OCI-LY7 (cell line): ENCODE measurements at regions of chr2 and their contacts with region 1.

Region 1: DNA sequence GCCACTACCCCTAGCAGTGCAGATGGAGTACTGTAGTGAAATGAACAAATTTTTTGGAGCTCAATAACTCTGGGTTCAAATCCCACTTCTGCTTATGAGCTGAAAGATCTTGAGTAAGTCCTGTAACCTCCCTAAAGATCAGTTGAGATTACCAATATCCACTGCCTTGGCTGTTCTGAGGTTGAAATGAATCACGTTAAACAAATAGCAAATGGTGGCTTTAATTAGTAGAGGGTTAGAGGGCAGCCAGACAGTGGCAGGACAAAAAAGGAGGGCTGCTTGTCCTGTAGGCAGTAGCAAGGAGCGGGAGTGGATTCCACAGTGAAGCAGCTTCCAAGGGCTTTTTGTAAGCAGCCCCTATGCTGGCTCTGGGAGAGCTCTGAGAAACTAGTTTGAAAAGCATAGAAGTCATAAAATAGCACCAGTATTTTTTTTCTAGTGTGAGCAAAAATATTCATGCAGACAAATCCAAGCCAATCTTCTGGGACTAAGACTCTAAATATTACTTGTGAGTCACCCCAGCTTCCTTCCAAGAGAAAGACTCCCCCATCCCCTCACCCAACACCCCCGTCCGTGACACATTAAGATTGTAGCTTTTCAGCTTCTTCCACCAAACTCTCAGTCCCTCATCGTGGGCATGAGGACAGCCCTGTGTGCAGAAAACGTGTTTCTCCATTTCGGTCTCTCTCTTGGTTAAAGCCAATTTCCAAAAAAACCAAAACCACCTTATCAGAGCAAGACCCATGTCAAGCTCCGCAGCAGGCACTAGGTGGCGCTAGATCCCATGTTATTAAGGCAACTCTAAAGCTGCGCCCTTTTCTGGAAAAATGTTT is 123.5 kb upstream of the LGALSL start:
- DNase-seq: peak; percentile 92
- H3K4me3 ChIP-seq: peak overlapping the region; percentile 29
- H3K27ac ChIP-seq: no peak overlapping the region
- H3K4me1 ChIP-seq: peaks cover 58% of the 10 kb centered on the region
- CTCF ChIP-seq: peak; percentile 99

Region 2: DNA sequence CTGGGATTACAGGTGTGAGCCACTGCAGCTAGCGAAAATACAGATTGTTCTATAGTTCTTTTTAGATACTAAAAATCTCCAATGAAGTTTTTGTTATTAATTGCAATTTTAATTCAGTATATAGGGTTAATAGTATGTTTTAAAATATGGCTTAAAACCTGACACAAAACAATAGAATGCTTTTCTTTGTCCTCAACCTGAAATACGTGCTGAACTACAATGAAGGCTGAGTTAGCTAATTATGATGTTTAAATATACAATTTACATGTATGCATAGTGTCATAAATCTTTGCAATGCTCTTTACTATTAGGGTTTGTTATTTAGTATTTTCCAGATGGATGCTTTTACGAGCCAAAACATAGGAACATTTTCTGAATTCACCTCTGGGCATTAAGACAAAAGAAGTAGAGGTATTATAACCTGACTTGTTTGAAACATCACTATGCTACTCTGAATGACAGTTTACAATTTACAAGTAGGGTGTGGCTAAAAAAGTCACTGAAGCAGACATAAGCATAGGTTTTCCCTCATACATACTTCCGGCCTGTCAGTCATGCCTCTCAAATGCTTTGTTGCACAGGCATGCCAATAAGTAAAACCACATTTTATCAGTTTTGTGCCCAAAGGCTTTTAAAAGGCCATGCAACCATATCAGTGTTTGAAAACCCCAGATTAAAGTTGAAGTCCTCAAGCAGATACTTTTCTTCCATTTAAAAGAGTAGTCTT is 1111.5 kb before region 1 on chr2:
- CTCF ChIA-PET with region 1: no interaction called
- POLR2A ChIA-PET with region 1: no interaction called
- intact Hi-C with region 1: no loop called
- DNase-seq: peak; percentile 30
- H3K4me3 ChIP-seq: no peak overlapping the region
- H3K27ac ChIP-seq: no peak overlapping the region
- H3K4me1 ChIP-seq: no peaks in the 10 kb centered on the region
- CTCF ChIP-seq: no peak

Region 3: GRCh38 chr2:64092502-64092901 is 238.0 kb before region 1 on chr2:
- CTCF ChIA-PET with region 1: no interaction called
- POLR2A ChIA-PET with region 1: no interaction called
- intact Hi-C with region 1: loop called (anchors 5 kb)
- DNase-seq: peak; percentile 83
- H3K4me3 ChIP-seq: peak overlapping the region; percentile 54
- H3K27ac ChIP-seq: peak overlapping the region; percentile 99
- H3K4me1 ChIP-seq: peaks cover 87% of the 10 kb centered on the region
- CTCF ChIP-seq: no peak

Region 4: GRCh38 chr2:64214281-64215115 is 116.0 kb before region 1 on chr2:
- CTCF ChIA-PET with region 1: interaction called, 4 read pairs
- POLR2A ChIA-PET with region 1: interaction called, 4 read pairs
- intact Hi-C with region 1: loop called (anchors 5 kb)
- DNase-seq: peak; percentile 94
- H3K4me3 ChIP-seq: peak overlapping the region; percentile 59
- H3K27ac ChIP-seq: peak overlapping the region; percentile 96
- H3K4me1 ChIP-seq: peaks cover 64% of the 10 kb centered on the region
- CTCF ChIP-seq: no peak

Region 5: GRCh38 chr2:64426183-64426952 is 95.9 kb after region 1 on chr2:
- CTCF ChIA-PET with region 1: no interaction called
- POLR2A ChIA-PET with region 1: no interaction called
- intact Hi-C with region 1: no loop called
- DNase-seq: no peak
- H3K4me3 ChIP-seq: no peak overlapping the region
- H3K27ac ChIP-seq: no peak overlapping the region
- H3K4me1 ChIP-seq: no peaks in the 10 kb centered on the region
- CTCF ChIP-seq: no peak

Region 6: DNA sequence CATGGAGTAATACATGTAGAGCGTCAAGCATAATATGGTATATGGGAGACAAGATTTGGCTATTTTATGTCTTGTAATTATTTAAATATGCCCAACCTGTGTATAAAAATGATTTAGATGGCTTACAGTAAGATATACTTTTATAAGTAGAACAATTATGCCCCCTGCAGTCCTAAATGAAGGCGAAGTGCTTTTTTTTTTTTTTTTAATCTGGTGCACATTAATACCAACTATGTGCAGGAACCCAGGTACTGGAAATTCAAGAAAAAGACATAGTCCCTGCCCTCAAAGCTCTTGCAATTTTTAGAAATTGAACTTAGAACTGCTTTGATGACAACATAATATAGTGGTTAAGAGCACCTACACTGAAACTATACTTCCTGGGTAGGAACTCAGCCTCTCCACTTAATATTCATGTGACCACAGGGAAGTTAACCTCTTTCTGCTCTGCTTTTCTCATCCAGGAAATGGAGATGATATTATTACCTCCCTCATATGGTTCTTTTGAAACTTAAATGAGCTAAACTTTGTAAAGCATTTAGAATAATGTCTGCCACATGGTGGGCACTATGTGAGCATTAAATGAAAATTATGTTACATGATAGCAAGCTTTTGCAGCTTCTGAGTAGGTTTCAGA is 231.8 kb after region 1 on chr2:
- CTCF ChIA-PET with region 1: no interaction called
- POLR2A ChIA-PET with region 1: interaction called, 3 read pairs
- intact Hi-C with region 1: loop called (anchors 2 kb)
- DNase-seq: peak; percentile 59
- H3K4me3 ChIP-seq: no peak overlapping the region
- H3K27ac ChIP-seq: peak overlapping the region; percentile 29
- H3K4me1 ChIP-seq: peaks cover 16% of the 10 kb centered on the region
- CTCF ChIP-seq: peak; percentile 88

Region 7: GRCh38 chr2:64865073-64865830 is 534.8 kb after region 1 on chr2:
- CTCF ChIA-PET with region 1: no interaction called
- POLR2A ChIA-PET with region 1: no interaction called
- intact Hi-C with region 1: loop called (anchors 5 kb)
- DNase-seq: peak; percentile 76
- H3K4me3 ChIP-seq: peak overlapping the region; percentile 69
- H3K27ac ChIP-seq: peak overlapping the region; percentile 20
- H3K4me1 ChIP-seq: peaks cover 54% of the 10 kb centered on the region
- CTCF ChIP-seq: peak; percentile 75